HEK293 (cell line): ENCODE measurements at regions of chr19 and their contacts with region 1.

Region 1: DNA sequence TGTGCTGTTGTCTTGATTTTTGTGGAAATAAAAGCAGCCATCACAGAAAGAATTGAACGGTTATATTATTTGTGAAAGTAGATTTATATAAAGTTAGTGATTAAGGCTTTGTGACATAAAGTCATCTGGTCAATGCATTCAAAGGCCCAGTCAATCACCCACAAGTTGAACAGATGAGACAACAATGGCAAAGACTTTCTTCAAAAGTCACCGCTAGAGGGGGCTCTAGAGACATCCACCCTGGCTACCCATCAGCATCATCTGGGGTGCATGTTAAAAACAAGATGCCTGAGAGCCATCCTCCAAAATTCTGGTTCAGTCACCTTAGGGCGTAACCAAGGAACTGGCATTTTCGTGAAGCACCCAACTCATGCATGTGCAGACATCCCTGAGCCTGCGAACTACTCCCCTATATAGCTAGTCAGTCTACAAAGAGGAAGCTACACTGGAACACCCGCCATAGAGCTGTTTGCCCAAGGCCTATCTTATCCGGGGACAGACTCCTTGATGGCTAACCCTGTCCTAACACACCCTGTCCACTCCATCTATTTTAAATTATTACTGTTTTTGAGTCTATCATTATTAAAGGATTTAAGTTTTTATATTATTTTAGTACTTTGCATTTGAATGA is 970.5 kb downstream of the UQCRFS1 start:
- H3K4me3 ChIP-seq: no peak overlapping the region
- H3K27ac ChIP-seq: no peak overlapping the region
- H3K4me1 ChIP-seq: no peaks in the 10 kb centered on the region
- CTCF ChIP-seq: peak; percentile 71

Region 2: DNA sequence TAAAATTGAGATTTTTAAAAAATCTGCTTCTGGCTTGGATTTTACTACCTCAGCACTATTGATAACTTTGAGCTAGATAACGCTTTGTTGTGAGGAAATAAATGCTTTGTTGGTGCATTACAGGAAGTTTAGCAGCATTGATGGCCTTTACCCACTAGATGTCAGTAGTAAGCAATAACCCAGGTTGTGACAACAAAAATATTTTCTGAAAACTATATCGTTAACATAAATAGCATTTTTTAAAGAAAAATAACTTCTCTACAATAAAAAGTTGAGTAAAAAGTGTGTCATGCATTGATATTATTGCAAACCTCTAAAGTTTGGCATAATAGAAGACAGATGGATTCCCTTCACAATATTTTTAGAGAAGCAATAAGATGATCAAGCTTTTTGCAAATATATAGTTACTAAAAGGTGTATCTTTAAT is 276.0 kb before region 1 on chr19:
- CTCF ChIA-PET with region 1: interaction called, 83 read pairs
- POLR2A ChIA-PET with region 1: no interaction called
- H3K4me3 ChIP-seq: no peak overlapping the region
- H3K27ac ChIP-seq: no peak overlapping the region
- H3K4me1 ChIP-seq: 0 out of 2 replicates have a peak, but pooled peaks cover 2% of the 10 kb centered on the region
- CTCF ChIP-seq: peak; percentile 55; the same call in 1 of the 2 replicates

Region 3: GRCh38 chr19:28228854-28229253 is 13.6 kb before region 1 on chr19:
- CTCF ChIA-PET with region 1: interaction called, 11 read pairs
- POLR2A ChIA-PET with region 1: no interaction called
- H3K4me3 ChIP-seq: no peak overlapping the region
- H3K27ac ChIP-seq: no peak overlapping the region
- H3K4me1 ChIP-seq: peaks cover 16% of the 10 kb centered on the region
- CTCF ChIP-seq: no peak

Region 4: GRCh38 chr19:28264556-28264955 is 22.1 kb after region 1 on chr19:
- CTCF ChIA-PET with region 1: interaction called, 10 read pairs
- POLR2A ChIA-PET with region 1: no interaction called
- H3K4me3 ChIP-seq: no peak overlapping the region
- H3K27ac ChIP-seq: no peak overlapping the region
- H3K4me1 ChIP-seq: 0 out of 2 replicates have a peak, but pooled peaks cover 2% of the 10 kb centered on the region
- CTCF ChIP-seq: no peak

Region 5: GRCh38 chr19:28471731-28472510 is 229.5 kb after region 1 on chr19:
- CTCF ChIA-PET with region 1: no interaction called
- POLR2A ChIA-PET with region 1: no interaction called
- H3K4me3 ChIP-seq: no peak overlapping the region
- H3K27ac ChIP-seq: no peak overlapping the region
- H3K4me1 ChIP-seq: peaks cover 11% of the 10 kb centered on the region
- CTCF ChIP-seq: no peak

Region 6: DNA sequence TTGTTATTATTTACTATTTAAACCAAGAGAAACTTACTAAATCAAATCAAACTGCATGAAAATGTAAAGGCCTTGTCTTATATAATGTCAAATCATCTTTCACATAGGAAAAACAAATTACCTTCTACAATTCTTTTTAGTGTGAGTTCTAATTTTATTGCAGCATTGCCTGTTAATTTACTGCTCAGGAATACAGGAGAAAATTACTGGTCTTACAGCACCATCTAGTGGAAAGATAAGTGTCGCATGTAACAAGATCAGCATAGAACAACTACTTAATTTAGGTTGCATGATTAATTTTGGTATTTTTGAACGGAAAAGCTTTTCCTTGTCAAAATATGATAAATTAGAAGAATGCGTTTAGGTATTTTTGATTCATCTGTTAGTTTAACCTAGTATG is 467.9 kb after region 1 on chr19:
- CTCF ChIA-PET with region 1: interaction called, 19 read pairs
- POLR2A ChIA-PET with region 1: no interaction called
- H3K4me3 ChIP-seq: no peak overlapping the region
- H3K27ac ChIP-seq: no peak overlapping the region
- H3K4me1 ChIP-seq: peaks cover 8% of the 10 kb centered on the region; the same call in 1 of the 2 replicates
- CTCF ChIP-seq: peak; percentile 77